ENCODE measurements at regions of chr4 and their contacts with region 1.

Region 1: GRCh38 chr4:48141048-48141447 is 7.0 kb upstream of the TXK start:
- DNase-seq: peak in 2 of 5 donors; percentile 43 to 54
- H3K4me3 ChIP-seq: no peak overlapping the region
- H3K4me3 Mint-ChIP-seq: no peak overlapping the region
- H3K27ac ChIP-seq: no peak overlapping the region
- H3K27ac Mint-ChIP-seq: peak overlapping the region in 1 of 8 donors; percentile 4
- H3K4me1 ChIP-seq: peaks cover 47% of the 10 kb centered on the region
- H3K4me1 Mint-ChIP-seq: peaks cover 44 to 52% (median 51%) of the 10 kb centered on the region in 3 donors
- H3K27me3 ChIP-seq: no peaks in the 10 kb centered on the region
- H3K27me3 Mint-ChIP-seq: peaks cover 0 to 2% of the 10 kb centered on the region in 2 donors

Region 2: GRCh38 chr4:48033825-48034413 is 107.1 kb before region 1 on chr4:
- CTCF ChIA-PET with region 1: interaction called, 11 read pairs
- POLR2A ChIA-PET with region 1: no interaction called
- DNase-seq: peak; percentile 24 to 68 (median 46)
- H3K4me3 ChIP-seq: no peak overlapping the region
- H3K4me3 Mint-ChIP-seq: peak overlapping the region in 1 of 7 donors; percentile 20
- H3K27ac ChIP-seq: no peak overlapping the region
- H3K27ac Mint-ChIP-seq: no peak overlapping the region
- H3K4me1 ChIP-seq: no peaks in the 10 kb centered on the region
- H3K4me1 Mint-ChIP-seq: peaks cover 3 to 7% (median 5%) of the 10 kb centered on the region in 3 donors
- H3K27me3 ChIP-seq: no peaks in the 10 kb centered on the region
- H3K27me3 Mint-ChIP-seq: peaks cover 0 to 5% of the 10 kb centered on the region in 2 donors

Region 3: GRCh38 chr4:48109413-48110263 is 31.4 kb before region 1 on chr4:
- CTCF ChIA-PET with region 1: interaction called, 21 read pairs
- POLR2A ChIA-PET with region 1: no interaction called
- DNase-seq: peak in 2 of 5 donors; percentile 29 to 49
- H3K4me3 ChIP-seq: no peak overlapping the region
- H3K4me3 Mint-ChIP-seq: peak overlapping the region in 1 of 7 donors; percentile 19
- H3K27ac ChIP-seq: no peak overlapping the region
- H3K27ac Mint-ChIP-seq: peak overlapping the region in 5 of 8 donors; percentile 13 to 92 (median 70)
- H3K4me1 ChIP-seq: peaks cover 17% of the 10 kb centered on the region
- H3K4me1 Mint-ChIP-seq: peaks cover 45 to 49% (median 46%) of the 10 kb centered on the region in 3 donors
- H3K27me3 ChIP-seq: no peaks in the 10 kb centered on the region
- H3K27me3 Mint-ChIP-seq: no peaks in the 10 kb centered on the region

Region 4: DNA sequence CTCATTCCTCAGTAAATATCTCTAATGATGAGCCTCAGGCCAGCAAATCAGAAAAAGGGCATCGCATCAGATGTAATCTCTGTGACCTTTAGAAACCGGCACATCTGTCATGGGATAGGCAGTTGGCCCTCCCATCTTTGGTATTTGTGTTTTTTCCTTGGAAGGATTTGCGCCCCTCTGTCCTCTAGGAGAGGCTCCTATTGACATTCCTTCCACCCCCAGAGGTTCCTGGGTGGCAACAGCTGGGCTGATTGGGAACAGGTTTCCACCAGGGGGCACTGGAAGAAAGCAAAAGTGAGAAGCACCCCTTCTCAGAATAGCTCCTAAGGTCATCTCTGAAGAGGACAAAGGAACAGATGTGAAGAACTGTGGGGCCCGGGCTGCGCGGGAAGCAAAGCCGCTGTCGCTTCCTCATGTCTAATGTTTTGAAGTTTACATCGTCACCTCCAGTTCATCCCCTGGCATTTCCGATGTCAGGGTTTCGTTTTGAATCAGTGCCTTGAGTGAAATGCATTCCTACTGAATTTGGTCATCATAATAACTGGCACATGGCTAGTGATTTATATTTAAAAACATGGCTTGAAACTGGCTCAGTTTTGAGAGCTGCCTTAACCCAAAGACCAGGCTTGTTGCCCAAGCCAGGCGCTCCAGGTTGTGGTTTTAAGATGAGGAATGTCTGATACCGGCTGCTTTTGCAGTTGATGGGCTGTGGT is 13.2 kb before region 1 on chr4:
- CTCF ChIA-PET with region 1: interaction called, 109 read pairs
- POLR2A ChIA-PET with region 1: interaction called, 20 read pairs
- DNase-seq: peak; percentile 13 to 74 (median 57)
- H3K4me3 ChIP-seq: peak overlapping the region; percentile 37
- H3K4me3 Mint-ChIP-seq: peak overlapping the region; percentile 35 to 92 (median 82)
- H3K27ac ChIP-seq: peak overlapping the region; percentile 10
- H3K27ac Mint-ChIP-seq: peak overlapping the region; percentile 90 to 99 (median 93)
- H3K4me1 ChIP-seq: peaks cover 89% of the 10 kb centered on the region
- H3K4me1 Mint-ChIP-seq: peaks cover 81 to 96% (median 92%) of the 10 kb centered on the region in 3 donors
- H3K27me3 ChIP-seq: no peaks in the 10 kb centered on the region
- H3K27me3 Mint-ChIP-seq: no peaks in the 10 kb centered on the region